ENCODE measurements at regions of chr6 and their contacts with region 1.

Region 1: DNA sequence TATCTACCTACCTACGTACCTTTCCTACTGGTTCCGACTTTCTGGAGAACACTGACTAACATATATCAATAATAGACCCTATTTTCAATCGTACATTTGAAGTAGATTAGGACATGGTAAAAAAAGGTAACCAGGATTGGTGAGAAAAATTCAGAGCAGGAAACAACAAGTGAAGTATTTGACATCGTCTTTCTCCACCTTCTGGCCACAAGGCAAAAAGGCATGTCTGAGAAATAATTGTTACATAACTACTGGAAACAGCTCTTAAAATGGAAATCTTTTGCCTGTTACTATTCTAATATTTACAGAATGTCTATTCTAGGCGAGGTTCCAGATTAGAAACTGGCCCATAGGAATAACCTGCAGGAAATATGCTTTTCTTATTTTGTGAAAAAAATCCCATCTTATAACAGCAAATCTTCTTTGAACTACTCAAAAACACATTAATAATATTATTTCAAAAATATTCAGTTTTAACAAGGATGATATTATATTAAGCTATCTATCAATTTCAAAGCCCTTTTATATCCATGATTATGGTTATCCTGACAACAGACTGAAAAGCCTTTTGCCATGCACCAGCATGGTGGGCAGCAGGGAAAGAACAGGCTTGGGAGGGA is 80.8 kb downstream of the RCAN2 start:
- DNase-seq: peak in 20 of 42 donors; percentile 17 to 78 (median 48)

Region 2: DNA sequence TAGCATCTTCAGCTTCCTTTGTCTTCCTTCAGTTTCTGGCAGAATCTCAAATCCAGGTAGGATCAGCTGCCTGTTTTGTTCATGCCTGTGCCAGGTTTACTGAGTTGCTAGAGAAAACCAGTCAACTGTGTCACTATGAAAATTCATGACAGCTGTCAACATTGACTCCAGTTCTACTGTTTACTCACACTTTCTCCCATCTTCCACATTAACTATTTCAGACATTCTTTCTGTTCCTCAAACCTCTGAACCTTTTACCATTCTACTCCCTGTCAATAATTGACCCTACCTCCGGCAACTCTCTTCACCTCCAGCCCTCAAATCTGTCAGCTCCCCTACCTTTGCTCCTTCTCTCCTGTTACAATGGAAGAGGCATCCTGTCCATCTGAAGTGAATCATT is 272.2 kb before region 1 on chr6:
- intact Hi-C with region 1: no loop called
- DNase-seq: no peak

Region 3: DNA sequence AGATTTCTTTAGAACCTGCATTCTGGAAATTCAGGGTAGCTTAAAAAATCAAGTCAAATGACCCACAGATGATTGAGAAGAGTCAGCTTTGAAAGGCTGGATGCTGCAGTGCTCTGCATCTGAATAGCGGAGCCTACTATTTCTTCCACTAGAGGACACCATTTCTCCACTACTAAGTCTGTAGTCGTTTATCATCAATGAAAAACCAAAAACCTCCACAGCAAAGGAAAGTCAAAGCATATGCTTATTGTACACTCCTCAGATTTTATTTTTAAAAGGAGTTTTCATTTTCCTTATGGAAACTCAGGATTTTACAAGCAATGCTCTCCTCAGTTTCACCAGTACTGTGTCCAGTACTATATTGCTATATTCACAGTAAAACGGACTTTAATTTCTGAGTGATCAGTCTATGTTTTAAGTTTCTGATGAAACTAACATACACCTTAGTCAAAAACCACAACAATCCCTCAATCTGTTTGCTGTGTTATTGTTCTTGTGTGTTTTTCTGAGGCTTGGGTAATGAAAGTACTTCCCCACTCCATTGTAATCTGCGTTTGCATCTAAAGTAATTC is 189.1 kb before region 1 on chr6:
- intact Hi-C with region 1: loop called (anchors 5 kb)
- DNase-seq: peak in 11 of 42 donors; percentile 21 to 75 (median 41)

Region 4: DNA sequence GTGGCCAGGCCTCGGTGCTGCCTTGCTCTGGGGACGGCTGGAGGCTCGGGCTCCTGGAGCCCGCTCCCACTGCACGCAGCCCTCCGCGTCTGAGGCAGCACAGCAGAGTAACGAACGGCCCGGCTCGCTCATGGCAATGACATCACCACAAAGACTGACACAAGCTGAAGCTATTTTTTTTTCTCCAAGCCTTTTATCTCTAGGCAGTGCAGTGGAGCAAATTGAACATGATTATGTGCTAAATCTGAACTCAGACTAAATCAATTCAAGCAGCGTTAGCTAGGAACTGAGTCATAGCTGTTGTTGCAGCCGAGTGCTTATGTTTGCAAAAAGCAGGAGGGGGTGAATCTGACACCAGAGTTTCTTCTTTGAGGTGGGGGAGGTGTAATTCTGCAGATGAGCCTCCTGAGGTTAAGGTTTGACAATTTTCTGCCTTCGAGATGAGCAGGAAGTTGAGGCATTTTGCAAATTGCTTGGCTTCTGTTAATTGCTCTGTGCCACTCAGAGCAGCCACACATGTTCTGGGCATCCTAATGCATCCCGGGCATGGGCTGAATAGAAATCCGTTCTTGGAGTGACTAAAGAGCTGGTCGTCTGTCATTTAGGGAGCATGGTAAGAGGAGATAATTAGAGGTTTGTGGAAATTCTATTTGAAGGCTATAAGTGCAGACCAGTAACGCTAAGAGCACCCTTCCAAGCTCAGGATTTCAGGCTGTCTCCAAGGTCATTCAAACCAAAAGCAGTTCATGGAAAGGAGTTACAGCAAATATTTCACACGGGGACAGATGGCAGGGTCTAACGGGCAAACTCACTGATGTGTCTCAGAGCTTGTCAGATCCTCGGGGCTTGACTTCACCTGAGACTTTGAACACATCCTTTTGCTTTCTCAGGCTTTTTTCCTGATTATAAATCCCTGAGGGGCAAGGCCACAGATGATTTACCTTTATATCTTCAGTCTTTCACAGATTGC is 84.6 kb before region 1 on chr6:
- intact Hi-C with region 1: loop called (anchors 10 kb)
- DNase-seq: peak; percentile 66 to 93 (median 79)

Measured in head of caudate nucleus (tissue), 42 donors.